HEK293 (cell line): ENCODE measurements at regions of chrX and their contacts with region 1.

Region 1: GRCh38 chrX:24259544-24260240 is 54.2 kb downstream of the SUPT20HL2 start:
- H3K4me3 ChIP-seq: no peak overlapping the region
- H3K27ac ChIP-seq: no peak overlapping the region
- H3K4me1 ChIP-seq: no peaks in the 10 kb centered on the region
- CTCF ChIP-seq: no peak; the same call in 1 of the 2 replicates

Region 2: GRCh38 chrX:24248042-24248441 is 11.7 kb before region 1 on chrX:
- CTCF ChIA-PET with region 1: interaction called, 22 read pairs
- POLR2A ChIA-PET with region 1: no interaction called
- H3K4me3 ChIP-seq: no peak overlapping the region
- H3K27ac ChIP-seq: no peak overlapping the region
- H3K4me1 ChIP-seq: peaks cover 8% of the 10 kb centered on the region
- CTCF ChIP-seq: no peak

Region 3: DNA sequence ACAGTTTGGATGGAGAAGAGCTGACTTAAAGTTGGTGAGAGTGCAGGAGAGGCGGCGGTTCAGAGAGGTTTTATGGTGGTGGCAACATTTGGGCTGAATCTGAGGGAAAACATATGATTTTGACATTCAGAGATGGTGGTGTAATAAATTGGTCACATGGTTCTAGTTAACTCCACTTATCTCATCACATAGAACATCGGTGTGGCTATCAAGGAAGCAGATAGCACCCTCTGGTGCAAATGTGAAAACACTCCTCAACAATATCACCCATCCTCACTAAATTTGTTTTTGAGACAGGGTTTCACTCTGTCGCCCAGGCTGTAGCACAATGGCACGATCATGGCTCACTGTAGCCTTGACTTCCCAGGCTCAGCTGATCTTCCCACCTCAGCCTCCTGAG is 25.4 kb after region 1 on chrX:
- CTCF ChIA-PET with region 1: interaction called, 12 read pairs
- POLR2A ChIA-PET with region 1: no interaction called
- H3K4me3 ChIP-seq: no peak overlapping the region
- H3K27ac ChIP-seq: no peak overlapping the region
- H3K4me1 ChIP-seq: no peaks in the 10 kb centered on the region
- CTCF ChIP-seq: no peak

Region 4: DNA sequence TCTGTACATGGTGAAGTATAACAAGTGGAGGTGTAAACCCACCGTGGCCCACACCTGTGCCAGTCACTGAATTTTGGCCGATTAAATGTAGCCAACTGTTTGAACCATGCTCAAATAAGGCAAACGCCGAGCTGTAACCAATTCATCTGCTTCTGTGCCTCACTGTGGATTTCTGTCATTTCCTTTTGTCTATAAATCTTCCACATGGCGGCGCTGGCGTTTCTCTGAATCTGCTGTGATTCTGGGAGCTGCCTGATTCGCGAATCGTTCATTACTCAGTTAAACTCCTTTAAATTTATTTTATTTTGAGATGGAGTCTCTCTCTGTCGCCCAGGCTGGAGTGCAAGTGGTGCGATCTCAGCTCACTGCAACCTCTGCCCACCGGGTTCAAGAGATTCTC is 34.9 kb after region 1 on chrX:
- CTCF ChIA-PET with region 1: interaction called, 12 read pairs
- POLR2A ChIA-PET with region 1: no interaction called
- H3K4me3 ChIP-seq: no peak overlapping the region
- H3K27ac ChIP-seq: no peak overlapping the region
- H3K4me1 ChIP-seq: no peaks in the 10 kb centered on the region
- CTCF ChIP-seq: no peak

Region 5: DNA sequence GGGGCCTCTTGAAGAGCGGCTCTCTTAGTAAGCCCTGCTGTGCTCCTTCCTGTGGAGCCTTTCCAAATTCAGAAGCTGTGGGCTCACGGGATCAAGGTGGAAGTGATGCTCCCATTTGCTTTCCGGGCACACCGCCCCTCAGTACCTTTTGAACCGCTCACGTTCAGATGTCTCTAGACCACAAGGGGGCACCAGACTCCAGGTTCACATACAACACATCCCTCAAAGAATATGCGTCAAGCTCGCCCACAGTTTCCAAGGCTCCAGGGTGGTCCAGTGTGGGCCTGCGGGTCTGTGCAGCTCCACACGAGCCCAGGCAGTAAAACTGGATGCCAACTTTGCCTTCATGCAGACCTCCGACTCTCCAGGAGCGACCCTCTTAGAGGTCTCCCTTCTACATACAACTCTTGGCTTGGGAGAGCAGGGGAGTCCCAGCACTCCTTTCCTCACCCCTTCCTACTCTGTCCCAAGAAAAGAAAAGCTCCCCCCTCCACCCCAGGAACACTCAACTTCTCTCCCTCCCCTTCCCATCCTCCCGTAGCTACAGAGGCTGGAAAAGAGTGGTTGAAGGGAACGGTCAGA is 111.8 kb after region 1 on chrX:
- CTCF ChIA-PET with region 1: interaction called, 18 read pairs
- POLR2A ChIA-PET with region 1: no interaction called
- H3K4me3 ChIP-seq: no peak overlapping the region
- H3K27ac ChIP-seq: no peak overlapping the region
- H3K4me1 ChIP-seq: no peaks in the 10 kb centered on the region
- CTCF ChIP-seq: peak; percentile 67

Region 6: GRCh38 chrX:24498975-24499374 is 239.3 kb after region 1 on chrX:
- CTCF ChIA-PET with region 1: interaction called, 12 read pairs
- POLR2A ChIA-PET with region 1: no interaction called
- H3K4me3 ChIP-seq: no peak overlapping the region
- H3K27ac ChIP-seq: no peak overlapping the region
- H3K4me1 ChIP-seq: peaks cover 7% of the 10 kb centered on the region
- CTCF ChIP-seq: no peak